Heart left ventricle (tissue), 16 donors: ENCODE measurements at regions of chr14 and their contacts with region 1.

Region 1: DNA sequence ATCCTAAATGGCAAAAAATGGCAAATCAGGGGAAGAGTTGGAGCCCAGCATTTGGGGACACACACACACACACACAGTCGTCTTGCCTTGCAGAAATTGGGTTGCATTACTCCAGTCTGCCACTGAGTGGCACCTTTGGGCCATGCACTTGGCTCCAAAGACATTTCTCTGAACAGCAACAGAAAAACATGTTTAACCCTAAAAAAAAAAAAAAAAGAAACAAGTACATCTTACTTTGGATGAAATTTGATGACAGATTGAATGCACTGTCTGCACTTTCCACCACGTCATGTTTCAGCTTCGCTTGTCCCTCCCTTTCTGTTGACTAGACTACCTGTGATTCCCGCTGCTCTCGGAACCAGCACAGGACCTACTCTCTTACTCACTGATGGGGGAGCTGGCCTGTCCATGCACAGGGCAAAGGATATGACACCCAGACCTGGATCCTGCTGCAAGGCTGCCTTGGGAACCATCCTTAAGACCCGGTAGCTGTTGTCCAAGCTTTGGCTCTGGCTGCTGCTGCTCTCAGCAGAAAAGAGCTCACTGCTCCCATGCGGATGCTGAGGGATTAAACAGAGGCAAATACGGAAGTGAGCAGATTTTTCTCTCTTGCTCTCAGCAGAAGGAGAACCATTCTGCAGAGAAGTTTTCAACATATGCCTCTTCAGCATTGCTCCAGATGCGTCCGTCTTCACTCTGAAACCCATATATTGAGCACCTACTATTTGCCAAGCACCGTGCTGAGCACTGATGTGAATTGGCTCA is 376.8 kb downstream of the DPF3 start:
- DNase-seq: peak in 4 of 5 donors; percentile 42 to 65 (median 52)
- ATAC-seq: peak; percentile 51 to 77 (median 68)
- H3K4me3 ChIP-seq: no peak overlapping the region
- H3K27ac ChIP-seq: no peak overlapping the region
- H3K4me1 ChIP-seq: peaks cover 0 to 26% (median 0%) of the 10 kb centered on the region in 12 donors
- H3K27me3 ChIP-seq: no peaks in the 10 kb centered on the region
- CTCF ChIP-seq: peak; percentile 82 to 93 (median 86)
- POLR2A ChIP-seq: no peak

Region 2: GRCh38 chr14:72451054-72451972 is 65.8 kb before region 1 on chr14:
- intact Hi-C with region 1: no loop called
- DNase-seq: no peak
- ATAC-seq: no peak
- H3K4me3 ChIP-seq: no peak overlapping the region
- H3K27ac ChIP-seq: peak overlapping the region in 1 of 12 donors; percentile 46
- H3K4me1 ChIP-seq: peaks cover 0 to 17% (median 0%) of the 10 kb centered on the region in 12 donors
- H3K27me3 ChIP-seq: no peaks in the 10 kb centered on the region
- CTCF ChIP-seq: no peak
- POLR2A ChIP-seq: no peak

Region 3: DNA sequence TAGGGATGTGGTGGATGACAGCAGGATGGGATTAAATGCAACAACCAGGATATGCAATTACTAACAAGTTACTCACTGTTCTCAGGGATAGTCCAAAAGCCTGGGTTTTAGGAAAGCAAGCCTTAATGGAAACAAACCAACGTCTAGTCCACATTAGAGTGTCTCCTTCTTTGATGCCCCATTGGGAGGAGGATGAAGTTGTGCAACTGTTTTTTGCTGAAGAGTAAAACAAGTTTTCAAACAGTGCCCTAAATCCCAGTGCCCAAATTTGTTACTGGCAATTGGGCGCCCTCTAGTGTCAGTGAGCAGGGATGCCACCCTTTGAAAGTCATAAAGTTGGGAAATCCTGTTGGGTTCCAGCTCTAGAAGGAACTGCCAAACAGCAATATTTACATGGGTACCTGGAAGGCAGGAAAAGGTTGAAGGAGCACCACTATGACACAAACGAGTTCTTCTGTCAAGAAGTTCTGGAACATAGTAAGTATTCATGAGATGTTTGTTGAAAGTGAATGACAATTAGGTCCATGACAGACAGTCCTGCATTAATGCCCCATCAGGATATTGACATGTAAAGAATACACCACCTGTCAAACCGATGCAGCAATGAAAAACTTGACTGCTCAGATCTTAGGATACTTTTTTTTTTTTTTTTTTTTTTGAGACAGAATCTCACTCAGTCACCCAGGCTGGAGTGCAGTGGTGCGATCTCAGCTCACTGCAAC is 387.9 kb after region 1 on chr14:
- intact Hi-C with region 1: loop called (anchors 1 to 2 kb)
- DNase-seq: peak in 3 of 5 donors; percentile 43 to 59 (median 58)
- ATAC-seq: peak; percentile 31 to 69 (median 58)
- H3K4me3 ChIP-seq: no peak overlapping the region
- H3K27ac ChIP-seq: no peak overlapping the region
- H3K4me1 ChIP-seq: peaks cover 0 to 27% (median 10%) of the 10 kb centered on the region in 12 donors
- H3K27me3 ChIP-seq: no peaks in the 10 kb centered on the region
- CTCF ChIP-seq: peak; percentile 83 to 96 (median 91)
- POLR2A ChIP-seq: no peak

Region 4: DNA sequence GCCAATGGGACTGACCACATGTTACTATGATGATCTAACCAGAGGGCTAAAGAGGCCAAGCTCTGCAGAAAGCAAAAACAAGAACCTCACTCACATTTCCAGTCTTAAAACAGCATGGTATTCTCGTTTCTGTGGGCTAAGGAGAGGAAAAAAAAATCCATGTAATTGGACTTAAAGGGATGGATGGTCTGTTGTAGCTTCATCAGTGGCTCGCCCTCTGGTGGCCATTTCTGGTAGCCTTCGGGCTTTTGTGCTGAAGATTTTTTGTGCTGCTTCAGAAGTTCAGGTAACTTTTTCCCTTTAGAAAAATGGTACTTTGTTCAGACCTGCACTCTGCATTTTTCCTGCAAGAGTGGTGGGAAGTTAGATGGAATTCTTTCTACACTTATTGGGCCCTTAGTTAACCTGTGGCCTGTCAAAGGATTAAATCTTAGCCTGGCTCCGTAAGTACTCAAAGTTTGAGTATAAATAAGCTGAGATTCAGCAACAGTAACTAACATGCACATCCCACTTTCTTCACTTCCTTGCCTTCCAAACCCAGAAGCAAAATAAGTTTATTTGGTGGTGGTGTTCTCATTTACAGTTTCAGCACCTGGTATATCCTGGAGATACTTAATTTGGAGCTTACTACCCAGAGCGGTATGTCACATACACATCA is 431.5 kb after region 1 on chr14:
- intact Hi-C with region 1: loop called (anchors 1 to 5 kb)
- DNase-seq: peak in 3 of 5 donors; percentile 32 to 64 (median 50)
- ATAC-seq: peak in 2 of 4 donors; percentile 30 to 61
- H3K4me3 ChIP-seq: no peak overlapping the region
- H3K27ac ChIP-seq: no peak overlapping the region
- H3K4me1 ChIP-seq: no peaks in the 10 kb centered on the region
- H3K27me3 ChIP-seq: no peaks in the 10 kb centered on the region
- CTCF ChIP-seq: peak; percentile 71 to 94 (median 88)
- POLR2A ChIP-seq: no peak

Region 5: GRCh38 chr14:73058224-73058921 is 541.3 kb after region 1 on chr14 and contains the start of gene RBM25:
- intact Hi-C with region 1: no loop called
- DNase-seq: peak; percentile 95 to 98 (median 96)
- ATAC-seq: peak; percentile 98 to 100 (median 99)
- H3K4me3 ChIP-seq: peak within 1 kb of the TSS; percentile 56 to 95 (median 87)
- H3K27ac ChIP-seq: peak within 1 kb of the TSS; percentile 77 to 97 (median 92)
- H3K4me1 ChIP-seq: peaks cover 6 to 46% (median 32%) of the 10 kb centered on the region in 12 donors
- H3K27me3 ChIP-seq: no peaks in the 10 kb centered on the region
- CTCF ChIP-seq: peak in 4 of 12 donors; percentile 9 to 38 (median 18)
- POLR2A ChIP-seq: peak; percentile 45 to 83
- total RNA-seq, gene RBM25: 13.1 to 49.2 (median 38.8) TPM